Tibial artery (tissue), 4 donors: ENCODE measurements at regions of chr5 and their contacts with region 1.

Region 1: DNA sequence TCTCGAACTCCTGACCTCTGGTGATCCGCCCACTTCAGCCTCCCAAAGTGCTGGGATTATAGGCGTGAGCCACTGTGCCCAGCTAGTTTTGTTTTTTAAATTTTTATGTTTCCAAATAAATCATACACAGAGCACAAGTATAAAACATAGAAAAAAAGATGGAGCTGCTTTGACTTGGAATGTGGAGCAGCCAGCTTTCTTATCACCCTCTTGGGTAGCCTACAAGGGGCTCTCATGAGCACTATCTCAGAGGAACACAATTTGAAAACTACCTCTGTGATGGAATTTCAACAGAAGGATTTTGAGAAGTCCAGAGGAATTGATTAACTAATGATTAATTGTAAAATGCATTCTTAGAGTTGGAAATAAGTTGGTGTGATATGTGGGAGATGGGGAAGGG is 45.9 kb downstream of the NSD1 start:
- DNase-seq: no peak
- H3K4me3 ChIP-seq: no peak overlapping the region
- H3K27ac ChIP-seq: no peak overlapping the region
- H3K4me1 ChIP-seq: peaks cover 0 to 19% (median 0%) of the 10 kb centered on the region in 4 donors
- H3K27me3 ChIP-seq: no peaks in the 10 kb centered on the region
- CTCF ChIP-seq: no peak

Region 2: GRCh38 chr5:177232761-177233160 is 53.3 kb after region 1 on chr5:
- intact Hi-C with region 1: loop called (anchors 2 kb)
- DNase-seq: no peak
- H3K4me3 ChIP-seq: no peak overlapping the region
- H3K27ac ChIP-seq: peak overlapping the region in 1 of 2 donors; percentile 3
- H3K4me1 ChIP-seq: peaks cover 0 to 30% (median 18%) of the 10 kb centered on the region in 4 donors
- H3K27me3 ChIP-seq: no peaks in the 10 kb centered on the region
- CTCF ChIP-seq: no peak

Region 3: GRCh38 chr5:177382423-177383029 is 203.1 kb after region 1 on chr5:
- intact Hi-C with region 1: no loop called
- DNase-seq: no peak
- H3K4me3 ChIP-seq: no peak overlapping the region
- H3K27ac ChIP-seq: no peak overlapping the region
- H3K4me1 ChIP-seq: no peaks in the 10 kb centered on the region
- H3K27me3 ChIP-seq: peaks cover 0 to 56% of the 10 kb centered on the region in 2 donors
- CTCF ChIP-seq: no peak